ENCODE measurements at regions of chr1 and their contacts with region 1.

Region 1: DNA sequence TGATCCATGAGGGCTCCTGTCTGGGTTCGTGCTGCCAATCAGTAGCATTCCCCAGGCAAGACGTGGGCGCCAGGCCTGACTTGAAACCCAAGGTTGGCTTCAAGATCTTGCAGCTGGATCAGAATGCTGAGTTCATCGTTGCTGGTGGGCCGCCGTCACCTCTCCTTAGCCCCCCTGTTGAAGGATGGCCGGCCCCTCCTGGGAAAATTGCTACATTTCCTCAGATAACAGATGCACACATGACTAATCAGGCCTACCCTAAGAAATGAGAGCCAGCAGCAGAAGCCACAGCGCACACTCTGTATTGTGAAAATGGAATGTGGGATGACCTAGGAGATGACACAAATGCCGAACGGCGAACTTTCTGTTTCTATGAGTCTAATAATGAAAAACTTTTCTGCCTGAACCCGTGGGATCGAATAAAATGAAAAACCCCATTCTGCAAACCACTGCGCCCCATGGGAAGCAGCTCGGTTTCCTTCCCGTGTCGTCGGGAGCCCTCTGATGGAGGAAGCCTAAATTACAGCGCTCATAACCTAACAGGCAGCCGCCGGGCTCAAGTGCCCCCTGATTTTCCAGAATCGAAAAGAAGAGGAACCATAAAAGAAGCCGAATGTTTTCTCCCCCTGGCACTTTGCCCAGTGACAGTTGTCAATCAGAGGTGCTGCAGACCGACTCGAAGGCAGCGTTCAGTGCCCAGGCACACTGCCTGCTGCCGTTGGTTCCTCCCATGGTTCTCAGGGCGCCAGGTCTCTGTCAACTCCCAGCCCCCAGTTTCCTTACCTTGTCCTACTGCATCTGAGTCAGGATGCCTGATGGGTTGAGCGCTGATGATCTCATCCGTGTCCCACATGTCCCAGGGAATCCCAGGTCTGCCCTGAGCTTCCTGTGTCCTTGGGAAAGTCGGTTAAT is 38.2 kb upstream of the H6PD start:
- DNase-seq: no peak
- H3K4me3 ChIP-seq: no peak overlapping the region
- H3K27me3 ChIP-seq: peaks cover 3% of the 10 kb centered on the region
- CTCF ChIP-seq: peak; percentile 79

Region 2: GRCh38 chr1:9128520-9129265 is 67.7 kb before region 1 on chr1 and contains the start of gene GPR157:
- CTCF ChIA-PET with region 1: interaction called, 11 read pairs
- POLR2A ChIA-PET with region 1: no interaction called
- DNase-seq: no peak
- H3K4me3 ChIP-seq: peak within 1 kb of the TSS; percentile 46
- H3K27me3 ChIP-seq: no peaks in the 10 kb centered on the region
- CTCF ChIP-seq: 0 out of 2 replicates have a peak, but pooled peaks have one; percentile 20
- polyA plus RNA-seq, gene GPR157: 1.9 and 2.5 TPM in 2 replicates

Region 3: GRCh38 chr1:9145021-9145668 is 51.2 kb before region 1 on chr1:
- CTCF ChIA-PET with region 1: interaction called, 15 read pairs
- POLR2A ChIA-PET with region 1: no interaction called
- DNase-seq: no peak
- H3K4me3 ChIP-seq: no peak overlapping the region
- H3K27me3 ChIP-seq: no peaks in the 10 kb centered on the region
- CTCF ChIP-seq: no peak

Region 4: DNA sequence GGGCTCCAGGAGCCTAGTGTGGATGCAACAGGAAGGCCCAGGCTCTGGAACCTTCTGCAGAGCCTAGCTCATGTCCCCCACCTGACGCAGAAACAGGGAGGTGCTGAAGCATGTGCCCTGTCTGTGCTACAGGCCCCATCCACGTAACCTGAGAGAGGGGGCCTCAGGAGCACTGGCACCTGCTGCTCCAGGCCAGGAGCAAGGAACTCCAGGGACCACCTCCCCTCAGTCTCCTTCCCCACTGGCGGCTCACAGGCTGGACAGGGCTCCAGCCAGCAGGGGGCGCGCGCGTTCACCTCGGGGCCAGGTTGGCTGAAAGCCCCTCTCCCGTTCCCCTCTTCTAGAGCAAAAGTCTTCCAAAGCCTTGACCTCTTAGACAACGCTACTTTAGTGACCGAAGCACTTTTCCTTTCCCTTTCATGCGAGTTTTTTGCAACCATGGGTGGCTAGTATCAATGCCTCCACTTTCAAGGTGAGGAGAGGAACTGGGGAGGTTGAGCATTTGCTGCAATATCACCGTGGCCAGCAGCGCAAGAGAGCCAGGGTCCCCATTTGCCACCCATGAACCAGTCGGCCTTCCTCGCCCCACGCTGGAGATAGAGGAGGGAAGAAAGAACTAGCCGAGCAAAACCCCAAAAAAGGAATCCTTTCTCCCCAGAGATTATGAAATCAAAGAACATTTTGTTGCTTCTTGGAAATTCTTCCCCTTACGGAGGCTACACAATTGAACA is 15.0 kb before region 1 on chr1:
- CTCF ChIA-PET with region 1: interaction called, 13 read pairs
- POLR2A ChIA-PET with region 1: interaction called, 3 read pairs
- DNase-seq: no peak
- H3K4me3 ChIP-seq: peak overlapping the region; percentile 89
- H3K27me3 ChIP-seq: no peaks in the 10 kb centered on the region
- CTCF ChIP-seq: peak; percentile 99